ENCODE measurements at regions of chr11 and their contacts with region 1.

Region 1: GRCh38 chr11:14892036-14892567 is at the start of gene CYP2R1:
- DNase-seq: peak; percentile 97 to 100 (median 99)
- ATAC-seq: peak; percentile 97
- H3K4me3 ChIP-seq: peak within 1 kb of the TSS; percentile 54
- H3K27ac ChIP-seq: peak within 1 kb of the TSS; percentile 79
- H3K4me1 ChIP-seq: peaks cover 23% of the 10 kb centered on the region in 2 experiments
- H3K27me3 ChIP-seq: no peaks in the 10 kb centered on the region
- CTCF ChIP-seq: peak in 2 of 3 experiments; percentile 15 to 17; a peak in 2 of 6 replicates
- EP300 ChIP-seq: no peak
- POLR2A ChIP-seq: no peak
- RAD21 ChIP-seq: no peak
- polyA plus RNA-seq, gene CYP2R1: 26.6 to 29.4 TPM

Region 2: DNA sequence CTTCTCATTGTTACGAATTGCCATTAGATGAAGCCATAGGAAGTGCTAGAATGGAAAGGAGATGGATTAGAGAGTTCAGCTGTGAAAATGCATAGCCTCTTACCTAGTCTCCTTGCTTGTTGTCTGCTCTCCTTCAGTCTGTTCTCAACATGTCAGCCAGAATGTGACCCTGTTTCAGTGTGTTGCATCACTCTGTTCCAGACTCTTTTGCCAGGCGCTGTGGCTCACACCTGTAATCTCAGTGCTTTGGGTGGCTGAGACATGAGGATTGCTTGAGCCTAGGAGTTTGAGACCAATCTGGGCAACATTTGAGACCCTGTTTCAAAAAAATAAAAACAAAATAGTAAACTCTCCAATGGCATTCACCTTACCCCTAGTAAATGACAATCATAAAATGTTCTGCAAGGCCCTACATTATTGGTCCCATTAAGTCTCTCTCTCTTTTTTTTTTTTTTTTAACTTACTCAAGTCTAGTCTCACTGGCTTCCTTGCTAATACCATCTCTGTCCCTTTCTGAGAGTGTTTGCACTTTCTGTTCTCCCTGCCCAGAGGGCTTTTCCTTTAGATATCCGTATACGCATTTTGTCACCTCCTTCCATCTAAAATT is 39.4 kb before region 1 on chr11:
- CTCF ChIA-PET with region 1: no interaction called
- POLR2A ChIA-PET with region 1: interaction called, 3 read pairs
- in situ Hi-C with region 1: no loop called
- intact Hi-C with region 1: loop called (anchors 5 kb)
- DNase-seq: peak in 1 of 4 experiments; percentile 23
- ATAC-seq: peak; percentile 98
- H3K4me3 ChIP-seq: no peak overlapping the region
- H3K27ac ChIP-seq: no peak overlapping the region; the same call in 2 of the 3 replicates
- H3K4me1 ChIP-seq: no peaks in the 10 kb centered on the region; a peak in 1 of 5 replicates
- H3K27me3 ChIP-seq: no peaks in the 10 kb centered on the region
- CTCF ChIP-seq: no peak
- EP300 ChIP-seq: peak; percentile 80
- POLR2A ChIP-seq: no peak
- RAD21 ChIP-seq: no peak

Measured in K562 (cell line).